Right ventricle myocardium inferior (tissue), 1 donor: ENCODE measurements at regions of chr17 and their contacts with region 1.

Region 1: DNA sequence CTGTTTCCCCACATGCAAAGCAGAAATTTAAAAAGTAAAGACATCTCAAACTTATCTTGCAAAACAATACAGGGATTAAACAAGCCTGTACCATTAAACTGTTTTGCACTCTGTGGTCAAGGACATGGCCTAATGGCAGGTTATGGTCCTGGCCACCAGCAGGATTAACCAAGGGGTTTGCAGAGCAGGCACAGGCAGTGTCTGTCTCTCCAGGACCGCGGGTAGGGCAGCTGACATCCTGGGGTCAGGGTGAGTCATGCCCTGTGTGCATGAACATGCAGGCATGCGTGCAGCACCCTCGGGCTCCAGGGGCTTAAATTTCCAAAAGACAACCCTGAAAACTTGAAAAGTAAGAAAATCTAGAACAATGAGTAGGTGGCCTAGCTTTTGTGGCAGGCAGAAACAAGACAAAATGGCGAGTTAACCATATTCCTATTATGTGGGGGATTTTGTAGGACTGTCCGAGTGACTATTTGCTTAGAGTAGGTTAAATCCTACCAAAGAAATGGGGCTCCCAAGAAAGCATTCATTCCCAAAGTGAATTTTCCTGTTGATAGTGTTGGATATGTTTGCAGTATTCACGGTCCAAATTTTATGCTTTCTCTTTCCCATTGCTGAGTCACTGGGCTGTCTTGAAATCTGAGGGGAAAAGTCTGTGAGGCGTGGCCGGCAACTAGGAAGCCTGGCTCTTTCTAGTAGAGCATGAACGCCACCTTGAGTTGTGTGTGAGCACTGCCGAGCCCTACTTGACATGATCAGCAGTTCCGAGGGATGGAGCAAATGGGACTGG is 158.4 kb upstream of the FAM20A start:
- DNase-seq: peak; percentile 92
- ATAC-seq: peak; percentile 99

Region 2: DNA sequence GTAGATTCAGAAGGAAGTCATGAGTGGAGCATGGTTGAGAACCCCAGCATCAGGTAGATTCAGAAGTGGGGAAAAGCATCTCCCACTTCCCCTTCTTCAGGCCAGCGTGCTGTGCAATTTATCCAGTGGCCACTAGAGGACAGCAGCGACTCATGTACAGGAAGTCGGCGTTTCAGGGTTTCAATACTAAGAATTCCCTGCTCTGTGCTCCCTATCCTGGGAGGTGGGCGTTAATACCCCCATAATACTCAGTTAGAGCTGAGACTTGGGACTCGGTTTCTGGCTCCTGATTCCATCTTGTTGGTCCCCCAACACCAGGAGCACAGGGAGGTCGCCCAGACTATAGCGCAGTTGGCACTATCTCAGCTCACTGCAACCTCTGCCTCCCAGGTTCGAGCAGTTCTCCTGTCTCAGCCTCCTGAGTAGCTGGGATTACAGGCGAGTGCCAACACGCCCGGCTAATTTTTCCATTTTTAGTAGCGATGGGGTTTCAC is 587.0 kb before region 1 on chr17:
- intact Hi-C with region 1: loop called (anchors 5 kb)
- DNase-seq: peak; percentile 82
- ATAC-seq: peak; percentile 78

Region 3: DNA sequence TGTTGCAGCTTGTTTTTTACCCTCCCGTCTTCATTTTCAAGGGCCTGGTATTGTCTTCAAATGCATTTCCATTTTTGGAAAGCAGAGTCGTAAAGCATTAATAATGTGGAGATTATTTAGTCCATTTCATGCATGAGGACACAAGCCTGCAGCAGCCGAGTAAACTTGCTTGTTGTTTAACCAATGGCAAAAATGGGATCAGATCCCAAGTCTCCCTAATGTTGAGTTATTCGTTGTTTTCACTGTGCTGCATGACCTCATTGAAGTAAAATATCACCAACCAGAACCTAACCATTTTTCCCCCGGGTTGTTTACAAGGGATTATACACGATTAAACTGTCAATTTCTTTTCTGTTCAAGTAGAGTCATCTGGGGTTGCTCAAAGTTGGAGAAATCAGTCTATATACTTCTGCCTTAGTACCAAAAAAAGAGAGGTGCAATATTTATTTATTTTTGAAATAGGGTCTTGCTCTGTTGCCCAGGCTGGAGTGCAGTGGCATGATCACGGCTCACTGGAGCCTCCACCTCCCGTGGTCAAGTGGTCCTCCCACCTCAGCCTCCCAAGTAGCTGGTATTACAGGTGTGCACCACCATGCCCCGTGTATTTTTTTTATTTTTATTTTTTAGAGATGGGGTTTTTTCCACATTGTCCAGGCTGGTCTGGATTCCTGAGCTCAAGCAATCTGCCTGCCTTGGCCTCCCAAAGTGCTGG is 499.3 kb before region 1 on chr17:
- intact Hi-C with region 1: loop called (anchors 10 kb)
- DNase-seq: no peak
- ATAC-seq: no peak

Region 4: GRCh38 chr17:68539548-68540467 is 219.7 kb before region 1 on chr17:
- intact Hi-C with region 1: loop called (anchors 5 kb)
- DNase-seq: peak; percentile 68
- ATAC-seq: peak; percentile 34

Region 5: DNA sequence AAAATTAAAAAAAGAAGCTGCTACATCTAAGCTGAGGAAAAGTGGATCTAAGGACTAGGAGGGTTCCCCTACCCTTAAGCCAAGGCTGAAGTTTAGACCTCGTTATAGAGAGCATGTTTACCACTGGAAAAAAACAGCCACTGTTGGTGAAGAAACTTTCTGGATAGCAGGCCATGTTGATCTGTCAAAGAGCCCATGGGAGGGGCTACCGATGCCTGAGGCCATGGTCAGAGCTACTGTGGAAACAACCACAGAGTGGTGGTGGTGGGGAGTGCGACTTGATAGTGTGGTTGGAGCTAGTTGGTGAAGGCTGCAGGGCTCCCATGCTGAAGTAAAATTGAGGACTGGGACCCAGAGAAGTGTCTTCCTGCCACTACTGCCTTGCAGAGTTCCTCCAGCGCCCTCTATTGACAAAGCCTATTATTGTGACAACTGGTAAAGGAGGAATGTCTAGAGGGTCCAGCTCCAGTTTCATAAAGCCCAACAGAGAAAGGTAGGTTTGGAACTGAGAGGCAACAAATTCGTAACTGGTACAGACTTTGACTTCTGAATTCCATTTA is 145.7 kb before region 1 on chr17:
- intact Hi-C with region 1: loop called (anchors 10 kb)
- DNase-seq: no peak
- ATAC-seq: peak; percentile 39

Region 6: GRCh38 chr17:68849673-68850610 is 90.4 kb after region 1 on chr17:
- intact Hi-C with region 1: no loop called
- DNase-seq: no peak
- ATAC-seq: no peak